Activated T-helper 1 cell treated with anti-CD3 and anti-CD28 coated beads, Interleukin-12 subunit alpha, Interleukin-12 subunit beta, Interleukin-2, Interleukin-4 antibody, amounts not matched to agents 30 ng/mL and 10 ng/mL and 1 ng/mL, durations not matched to agents 14 hours and 24 hours and 36 hours (primary cell): ENCODE measurements at regions of chr3 and their contacts with region 1.

Region 1: DNA sequence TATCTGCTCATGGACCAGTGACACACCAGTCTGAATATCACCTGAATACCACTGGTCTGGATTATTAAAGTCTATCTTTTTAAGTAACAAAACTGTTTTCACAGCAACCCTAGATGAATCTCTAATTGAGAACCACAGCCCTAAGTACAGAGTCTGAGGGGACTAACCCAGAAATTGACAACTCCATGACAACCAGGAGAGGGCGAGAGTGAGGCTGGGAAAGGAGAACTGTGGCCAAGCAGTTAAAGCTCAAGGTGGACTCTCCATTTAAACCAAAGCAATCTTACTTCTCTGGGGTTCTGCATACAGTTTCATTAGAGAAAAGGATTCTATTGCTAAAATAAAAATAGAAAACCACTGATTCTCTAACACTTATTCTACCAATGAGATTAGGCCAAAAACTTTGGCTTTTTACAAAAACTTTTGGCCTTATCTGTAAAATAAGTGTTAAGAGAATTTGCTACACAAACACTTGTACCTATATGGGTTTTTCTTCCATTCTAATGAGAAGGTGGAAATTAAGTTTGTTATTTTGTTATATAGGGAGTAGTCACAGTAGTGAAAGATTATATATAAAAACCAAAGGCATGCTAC is 11.4 kb downstream of the NEK10 start:
- DNase-seq: peak; percentile 35
- H3K4me3 Mint-ChIP-seq: no peak overlapping the region
- H3K27ac Mint-ChIP-seq: no peak overlapping the region
- H3K4me1 Mint-ChIP-seq: peaks cover 24% of the 10 kb centered on the region
- H3K27me3 Mint-ChIP-seq: peaks cover 16% of the 10 kb centered on the region

Region 2: GRCh38 chr3:27253831-27254230 is 103.9 kb before region 1 on chr3:
- intact Hi-C with region 1: no loop called
- DNase-seq: no peak
- H3K4me3 Mint-ChIP-seq: no peak overlapping the region
- H3K27ac Mint-ChIP-seq: no peak overlapping the region
- H3K4me1 Mint-ChIP-seq: no peaks in the 10 kb centered on the region
- H3K27me3 Mint-ChIP-seq: no peaks in the 10 kb centered on the region

Region 3: DNA sequence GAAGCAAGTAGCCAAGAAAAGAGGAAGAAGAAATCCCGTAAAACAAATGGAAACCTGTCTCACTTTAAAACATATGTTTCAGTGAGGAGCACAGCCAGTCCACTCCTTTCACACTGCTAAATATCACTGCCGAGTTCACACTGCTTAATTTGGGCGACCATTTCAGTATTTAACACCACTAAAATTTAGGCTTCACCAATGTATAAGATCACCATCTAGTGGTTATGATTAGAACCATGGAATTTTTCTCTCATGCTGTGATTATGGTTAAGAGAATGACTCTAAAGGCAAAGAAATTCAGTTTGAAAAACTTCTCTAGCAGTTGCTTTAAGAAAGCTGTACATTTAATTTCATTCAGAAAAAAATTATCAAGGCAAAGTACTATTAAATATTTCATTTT is 109.8 kb after region 1 on chr3:
- intact Hi-C with region 1: loop called (anchors 1 kb)
- DNase-seq: no peak
- H3K4me3 Mint-ChIP-seq: no peak overlapping the region
- H3K27ac Mint-ChIP-seq: no peak overlapping the region
- H3K4me1 Mint-ChIP-seq: peaks cover 8% of the 10 kb centered on the region
- H3K27me3 Mint-ChIP-seq: no peaks in the 10 kb centered on the region

Region 4: DNA sequence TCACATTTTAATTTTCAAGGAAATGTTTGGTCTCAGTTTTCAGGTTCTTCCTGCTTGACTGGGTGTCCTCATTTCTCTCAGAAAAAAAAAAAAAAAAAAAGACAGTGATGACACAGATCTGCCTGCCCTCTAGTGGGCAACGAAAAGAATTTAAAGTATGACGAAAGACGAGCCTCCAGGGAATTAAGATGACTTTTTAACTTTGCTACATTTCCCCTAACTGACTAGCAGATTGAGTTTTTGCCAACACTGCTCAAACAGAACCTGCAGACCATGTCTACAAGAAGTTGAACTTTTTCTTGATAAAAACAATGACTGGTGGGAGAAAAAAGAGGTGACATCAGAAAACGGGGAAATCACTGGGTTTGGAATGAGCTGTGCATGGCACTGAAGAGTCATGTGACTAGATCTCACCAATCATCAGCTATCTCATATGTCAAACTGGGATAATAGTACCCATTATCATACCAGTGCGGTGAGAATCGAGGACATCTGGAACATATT is 323.5 kb after region 1 on chr3:
- intact Hi-C with region 1: loop called (anchors 1 kb)
- DNase-seq: no peak
- H3K4me3 Mint-ChIP-seq: peak overlapping the region; percentile 41
- H3K27ac Mint-ChIP-seq: peak overlapping the region; percentile 67
- H3K4me1 Mint-ChIP-seq: peaks cover 10% of the 10 kb centered on the region
- H3K27me3 Mint-ChIP-seq: peaks cover 5% of the 10 kb centered on the region